ENCODE measurements at regions of chr1 and their contacts with region 1.

Region 1: GRCh38 chr1:116667575-116668105 is at the start of gene IGSF3:
- DNase-seq: peak; percentile 83
- ATAC-seq: peak; percentile 89 to 94
- total RNA-seq, gene IGSF3: 14.3 to 15.6 TPM

Region 2: GRCh38 chr1:116576960-116577359 is 90.7 kb before region 1 on chr1:
- intact Hi-C with region 1: loop called (anchors 2 to 10 kb)
- DNase-seq: no peak
- ATAC-seq: no peak

Region 3: GRCh38 chr1:116628448-116628847 is 39.2 kb before region 1 on chr1:
- intact Hi-C with region 1: loop called in 1 of 2 experiments (anchors 5 kb)
- DNase-seq: no peak
- ATAC-seq: no peak

Region 4: GRCh38 chr1:116711263-116711840 is 43.7 kb after region 1 on chr1:
- intact Hi-C with region 1: no loop called
- DNase-seq: no peak
- ATAC-seq: peak; percentile 53 to 84